ENCODE measurements at regions of chr10 and their contacts with region 1.

Region 1: GRCh38 chr10:72364239-72364777 is 9.6 kb upstream of the DNAJB12 start:
- DNase-seq: peak; percentile 73 to 91 (median 85)
- ATAC-seq: peak; percentile 100
- H3K4me3 ChIP-seq: peak overlapping the region; percentile 11 to 12
- H3K4me3 Mint-ChIP-seq: peak overlapping the region; percentile 44
- H3K27ac ChIP-seq: peak overlapping the region in 1 of 2 experiments; percentile 30
- H3K27ac Mint-ChIP-seq: peak overlapping the region; percentile 84
- H3K4me1 ChIP-seq: peaks cover 9% of the 10 kb centered on the region
- H3K4me1 Mint-ChIP-seq: peaks cover 16% of the 10 kb centered on the region
- H3K27me3 ChIP-seq: no peaks in the 10 kb centered on the region
- H3K27me3 Mint-ChIP-seq: no peaks in the 10 kb centered on the region
- CTCF ChIP-seq: peak; percentile 68

Region 2: GRCh38 chr10:72375585-72375984 is 11.3 kb after region 1 on chr10:
- CTCF ChIA-PET with region 1: interaction called, 27 read pairs
- POLR2A ChIA-PET with region 1: interaction called, 3 read pairs
- intact Hi-C with region 1: no loop called
- DNase-seq: no peak
- ATAC-seq: no peak
- H3K4me3 ChIP-seq: no peak overlapping the region
- H3K4me3 Mint-ChIP-seq: no peak overlapping the region
- H3K27ac ChIP-seq: no peak overlapping the region
- H3K27ac Mint-ChIP-seq: no peak overlapping the region
- H3K4me1 ChIP-seq: peaks cover 2% of the 10 kb centered on the region
- H3K4me1 Mint-ChIP-seq: peaks cover 2% of the 10 kb centered on the region
- H3K27me3 ChIP-seq: no peaks in the 10 kb centered on the region
- H3K27me3 Mint-ChIP-seq: no peaks in the 10 kb centered on the region
- CTCF ChIP-seq: no peak

Region 3: GRCh38 chr10:72407927-72408600 is 43.8 kb after region 1 on chr10:
- CTCF ChIA-PET with region 1: no interaction called
- POLR2A ChIA-PET with region 1: no interaction called
- intact Hi-C with region 1: no loop called
- DNase-seq: no peak
- ATAC-seq: no peak
- H3K4me3 ChIP-seq: no peak overlapping the region
- H3K4me3 Mint-ChIP-seq: no peak overlapping the region
- H3K27ac ChIP-seq: no peak overlapping the region
- H3K27ac Mint-ChIP-seq: no peak overlapping the region
- H3K4me1 ChIP-seq: no peaks in the 10 kb centered on the region
- H3K4me1 Mint-ChIP-seq: no peaks in the 10 kb centered on the region
- H3K27me3 ChIP-seq: no peaks in the 10 kb centered on the region
- H3K27me3 Mint-ChIP-seq: no peaks in the 10 kb centered on the region
- CTCF ChIP-seq: no peak

Region 4: GRCh38 chr10:72625608-72626443 is 261.5 kb after region 1 on chr10 and contains the start of gene MICU1:
- CTCF ChIA-PET with region 1: interaction called, 4 read pairs
- POLR2A ChIA-PET with region 1: no interaction called
- intact Hi-C with region 1: loop called (anchors 5 kb)
- DNase-seq: peak; percentile 84 to 97 (median 93)
- ATAC-seq: peak; percentile 99
- H3K4me3 ChIP-seq: peak within 1 kb of the TSS; percentile 91 to 99
- H3K4me3 Mint-ChIP-seq: peak within 1 kb of the TSS; percentile 98
- H3K27ac ChIP-seq: peak within 1 kb of the TSS; percentile 63 to 64
- H3K27ac Mint-ChIP-seq: peak within 1 kb of the TSS; percentile 92
- H3K4me1 ChIP-seq: peaks cover 11% of the 10 kb centered on the region
- H3K4me1 Mint-ChIP-seq: peaks cover 23% of the 10 kb centered on the region
- H3K27me3 ChIP-seq: no peaks in the 10 kb centered on the region
- H3K27me3 Mint-ChIP-seq: no peaks in the 10 kb centered on the region
- CTCF ChIP-seq: no peak
- total RNA-seq, gene MICU1: 8.2 to 11.3 TPM

Region 5: DNA sequence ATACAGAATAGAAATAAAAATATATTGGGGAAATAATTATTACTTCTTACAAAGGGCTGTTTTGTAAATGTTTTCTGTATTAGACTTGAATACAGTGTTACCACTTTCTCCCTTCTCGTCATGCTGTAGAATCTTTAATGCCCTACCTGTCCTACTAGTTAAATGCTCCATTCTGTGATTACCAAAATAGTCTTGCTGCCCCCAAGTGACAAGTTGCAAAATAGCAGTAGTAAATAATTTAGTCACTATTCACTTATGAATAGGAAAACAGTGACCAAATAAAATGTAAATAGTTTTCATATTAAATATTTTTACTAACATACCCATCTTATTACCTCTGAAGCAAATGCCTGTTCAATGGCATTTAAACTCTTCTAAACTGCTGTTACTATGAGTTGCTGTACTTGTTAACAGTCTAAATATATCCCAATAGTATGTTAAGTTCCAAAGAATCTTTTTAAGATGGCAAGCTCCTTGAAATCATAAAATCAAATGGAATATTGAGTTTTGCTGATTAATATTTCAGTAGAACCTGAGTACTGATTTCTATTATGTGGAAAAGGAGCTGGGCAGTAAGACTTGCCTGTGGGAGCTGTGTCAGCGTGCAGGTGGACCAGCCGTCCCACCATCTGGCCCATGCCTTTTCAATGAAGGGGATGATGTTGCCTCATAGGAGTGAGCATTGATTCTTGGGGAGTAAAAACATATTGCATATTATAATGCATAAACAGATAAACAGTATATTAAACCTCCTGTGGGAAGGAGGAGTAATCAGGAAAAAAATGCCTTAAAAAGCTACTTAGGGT is 511.1 kb after region 1 on chr10:
- CTCF ChIA-PET with region 1: interaction called, 9 read pairs
- POLR2A ChIA-PET with region 1: no interaction called
- intact Hi-C with region 1: loop called (anchors 1 kb)
- DNase-seq: peak in 2 of 9 experiments; percentile 37 to 51
- ATAC-seq: no peak
- H3K4me3 ChIP-seq: no peak overlapping the region
- H3K4me3 Mint-ChIP-seq: no peak overlapping the region
- H3K27ac ChIP-seq: no peak overlapping the region
- H3K27ac Mint-ChIP-seq: no peak overlapping the region
- H3K4me1 ChIP-seq: no peaks in the 10 kb centered on the region
- H3K4me1 Mint-ChIP-seq: no peaks in the 10 kb centered on the region
- H3K27me3 ChIP-seq: no peaks in the 10 kb centered on the region
- H3K27me3 Mint-ChIP-seq: no peaks in the 10 kb centered on the region
- CTCF ChIP-seq: peak; percentile 40

Region 6: DNA sequence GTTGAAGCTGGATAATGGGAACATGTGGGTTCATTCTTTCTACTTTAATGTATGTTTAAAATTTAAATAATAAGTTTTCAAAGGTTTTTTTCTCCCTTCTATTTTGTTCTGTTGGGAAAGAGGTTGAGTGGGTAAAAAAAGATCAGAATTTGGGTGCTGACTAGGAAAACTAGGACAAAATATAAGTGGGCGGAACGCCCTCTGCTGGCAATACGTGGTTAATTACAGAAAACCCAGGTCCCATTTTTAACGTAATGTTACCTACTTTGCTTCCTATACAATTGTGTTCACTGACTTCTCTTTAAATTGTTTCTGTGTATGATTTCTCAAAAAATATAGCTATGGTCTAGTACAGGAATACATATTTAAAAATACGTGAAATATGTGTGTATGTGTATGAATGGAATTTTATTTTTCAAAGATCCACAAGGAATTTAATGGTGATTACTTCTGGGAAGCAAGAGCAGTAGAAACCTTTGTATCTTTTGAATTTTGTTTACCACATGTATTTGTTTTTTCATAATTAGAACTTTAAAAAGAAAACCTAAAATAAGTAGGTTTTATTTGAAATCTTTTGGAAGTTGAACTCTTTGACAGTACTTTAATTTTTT is 794.8 kb after region 1 on chr10:
- CTCF ChIA-PET with region 1: interaction called, 4 read pairs
- POLR2A ChIA-PET with region 1: no interaction called
- intact Hi-C with region 1: loop called (anchors 1 kb)
- DNase-seq: peak; percentile 22 to 76 (median 64)
- ATAC-seq: peak; percentile 71
- H3K4me3 ChIP-seq: no peak overlapping the region
- H3K4me3 Mint-ChIP-seq: no peak overlapping the region
- H3K27ac ChIP-seq: no peak overlapping the region
- H3K27ac Mint-ChIP-seq: no peak overlapping the region
- H3K4me1 ChIP-seq: peaks cover 13% of the 10 kb centered on the region
- H3K4me1 Mint-ChIP-seq: peaks cover 38% of the 10 kb centered on the region
- H3K27me3 ChIP-seq: no peaks in the 10 kb centered on the region
- H3K27me3 Mint-ChIP-seq: no peaks in the 10 kb centered on the region
- CTCF ChIP-seq: peak; percentile 88